Natural killer cell (primary cell): ENCODE measurements at regions of chr11 and their contacts with region 1.

Region 1: GRCh38 chr11:122853971-122854446 is 15.7 kb downstream of the CRTAM start:
- DNase-seq: peak in 1 of 2 donors; percentile 85
- ATAC-seq: no peak
- H3K4me3 ChIP-seq: no peak overlapping the region
- H3K4me3 Mint-ChIP-seq: no peak overlapping the region
- H3K27ac ChIP-seq: no peak overlapping the region
- H3K27ac Mint-ChIP-seq: no peak overlapping the region
- H3K4me1 ChIP-seq: peaks cover 54% of the 10 kb centered on the region
- H3K4me1 Mint-ChIP-seq: peaks cover 49 to 51% of the 10 kb centered on the region in 2 donors
- H3K27me3 ChIP-seq: no peaks in the 10 kb centered on the region
- H3K27me3 Mint-ChIP-seq: no peaks in the 10 kb centered on the region
- CTCF ChIP-seq: peak; percentile 82

Region 2: GRCh38 chr11:121696177-121696871 is 1157.7 kb before region 1 on chr11:
- intact Hi-C with region 1: no loop called
- DNase-seq: no peak
- ATAC-seq: no peak
- H3K4me3 ChIP-seq: no peak overlapping the region
- H3K4me3 Mint-ChIP-seq: no peak overlapping the region
- H3K27ac ChIP-seq: no peak overlapping the region
- H3K27ac Mint-ChIP-seq: no peak overlapping the region
- H3K4me1 ChIP-seq: no peaks in the 10 kb centered on the region
- H3K4me1 Mint-ChIP-seq: no peaks in the 10 kb centered on the region
- H3K27me3 ChIP-seq: no peaks in the 10 kb centered on the region
- H3K27me3 Mint-ChIP-seq: peaks cover 3 to 4% of the 10 kb centered on the region in 2 donors
- CTCF ChIP-seq: no peak

Region 3: DNA sequence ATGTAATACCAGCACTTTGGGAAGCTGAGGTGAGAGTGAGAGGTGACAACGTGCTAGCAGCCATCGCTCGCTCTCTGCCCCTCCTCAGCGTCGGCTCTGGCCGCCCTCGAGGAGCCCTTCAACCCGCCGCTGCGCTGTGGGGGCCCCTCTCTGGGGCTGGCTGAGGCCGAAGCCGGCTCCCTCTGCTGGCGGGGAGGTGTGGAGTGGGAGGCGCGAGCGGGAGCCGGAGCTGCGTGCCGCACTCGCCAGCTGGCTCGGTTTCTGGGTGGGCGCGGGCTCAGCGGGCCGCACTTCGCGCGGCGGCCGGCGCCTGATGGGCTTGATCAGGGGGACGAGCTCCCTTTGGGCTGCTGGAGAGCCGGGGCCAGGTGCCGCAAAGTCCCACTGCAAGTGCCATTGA is 297.4 kb before region 1 on chr11:
- intact Hi-C with region 1: no loop called
- DNase-seq: peak in 1 of 2 donors; percentile 11
- ATAC-seq: peak in 1 of 3 donors; percentile 72
- H3K4me3 ChIP-seq: no peak overlapping the region
- H3K4me3 Mint-ChIP-seq: peak overlapping the region; percentile 6
- H3K27ac ChIP-seq: no peak overlapping the region
- H3K27ac Mint-ChIP-seq: no peak overlapping the region
- H3K4me1 ChIP-seq: no peaks in the 10 kb centered on the region
- H3K4me1 Mint-ChIP-seq: no peaks in the 10 kb centered on the region
- H3K27me3 ChIP-seq: no peaks in the 10 kb centered on the region
- H3K27me3 Mint-ChIP-seq: peaks cover 8 to 14% of the 10 kb centered on the region in 2 donors
- CTCF ChIP-seq: no peak

Region 4: DNA sequence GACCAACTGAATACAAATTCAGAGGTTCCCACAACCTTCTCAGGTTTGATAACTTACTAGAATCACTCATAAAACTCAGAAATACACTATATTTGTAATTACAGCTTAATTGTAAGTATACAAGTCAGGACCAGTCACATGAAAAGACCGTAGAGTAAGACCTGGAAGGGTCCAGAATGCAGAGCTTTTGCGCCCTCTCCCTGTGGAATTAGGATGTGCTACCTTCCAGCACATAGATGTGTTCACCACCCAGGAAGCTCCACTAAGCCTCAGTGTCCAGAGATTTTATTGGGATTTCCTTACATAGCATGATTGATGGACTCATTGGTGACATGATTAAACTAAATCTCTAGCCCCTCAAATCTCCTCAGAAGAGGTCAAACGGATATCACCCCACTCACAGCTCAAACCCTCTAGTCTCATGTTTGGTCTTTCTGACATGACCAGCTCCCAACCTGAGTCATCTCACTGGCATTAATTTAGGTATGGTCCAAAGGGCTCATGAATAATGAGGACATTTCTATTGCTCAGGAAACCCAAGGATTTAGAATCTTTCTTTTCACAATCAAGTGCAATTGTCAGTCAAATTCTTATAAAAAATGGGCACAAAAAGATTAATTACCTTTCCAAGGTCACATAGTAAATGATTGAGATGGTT is 275.7 kb before region 1 on chr11:
- intact Hi-C with region 1: loop called (anchors 1 kb)
- DNase-seq: no peak
- ATAC-seq: no peak
- H3K4me3 ChIP-seq: no peak overlapping the region
- H3K4me3 Mint-ChIP-seq: no peak overlapping the region
- H3K27ac ChIP-seq: no peak overlapping the region
- H3K27ac Mint-ChIP-seq: no peak overlapping the region
- H3K4me1 ChIP-seq: peaks cover 8% of the 10 kb centered on the region
- H3K4me1 Mint-ChIP-seq: peaks cover 10 to 11% of the 10 kb centered on the region in 2 donors
- H3K27me3 ChIP-seq: no peaks in the 10 kb centered on the region
- H3K27me3 Mint-ChIP-seq: peaks cover 3 to 6% of the 10 kb centered on the region in 2 donors
- CTCF ChIP-seq: no peak

Region 5: GRCh38 chr11:122796128-122796717 is 57.8 kb before region 1 on chr11:
- intact Hi-C with region 1: loop called (anchors 1 kb)
- DNase-seq: peak; percentile 61 to 82
- ATAC-seq: peak; percentile 87 to 99 (median 95)
- H3K4me3 ChIP-seq: no peak overlapping the region
- H3K4me3 Mint-ChIP-seq: no peak overlapping the region
- H3K27ac ChIP-seq: no peak overlapping the region
- H3K27ac Mint-ChIP-seq: no peak overlapping the region
- H3K4me1 ChIP-seq: peaks cover 5% of the 10 kb centered on the region
- H3K4me1 Mint-ChIP-seq: peaks cover 0 to 5% of the 10 kb centered on the region in 2 donors
- H3K27me3 ChIP-seq: no peaks in the 10 kb centered on the region
- H3K27me3 Mint-ChIP-seq: no peaks in the 10 kb centered on the region
- CTCF ChIP-seq: peak; percentile 93

Region 6: DNA sequence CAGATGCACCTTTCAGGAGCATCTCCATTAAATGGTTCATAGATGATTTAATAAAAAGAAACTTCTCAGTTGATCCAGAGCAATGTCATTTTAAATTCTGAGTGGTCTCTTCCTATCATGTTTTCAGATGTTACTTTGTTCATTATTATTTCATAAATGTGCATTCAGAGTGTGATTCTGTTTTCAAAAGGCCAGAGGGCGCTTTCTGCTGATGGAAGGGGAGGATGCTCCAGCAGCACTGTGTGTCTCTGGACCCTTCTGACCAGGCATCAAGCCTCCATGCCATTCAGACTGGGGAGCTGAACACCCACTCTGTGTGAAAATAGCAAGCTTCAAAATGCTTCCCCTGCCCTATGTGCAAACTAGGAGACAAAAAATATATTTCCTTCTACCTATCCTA is 39.6 kb before region 1 on chr11:
- intact Hi-C with region 1: loop called (anchors 5 kb)
- DNase-seq: peak in 1 of 2 donors; percentile 45
- ATAC-seq: peak in 1 of 3 donors; percentile 57
- H3K4me3 ChIP-seq: no peak overlapping the region
- H3K4me3 Mint-ChIP-seq: no peak overlapping the region
- H3K27ac ChIP-seq: no peak overlapping the region
- H3K27ac Mint-ChIP-seq: no peak overlapping the region
- H3K4me1 ChIP-seq: no peaks in the 10 kb centered on the region
- H3K4me1 Mint-ChIP-seq: peaks cover 19 to 30% of the 10 kb centered on the region in 2 donors
- H3K27me3 ChIP-seq: no peaks in the 10 kb centered on the region
- H3K27me3 Mint-ChIP-seq: no peaks in the 10 kb centered on the region
- CTCF ChIP-seq: no peak

Region 7: GRCh38 chr11:122837528-122838346 is 16.3 kb before region 1 on chr11:
- intact Hi-C with region 1: loop called (anchors 1 kb)
- DNase-seq: no peak
- ATAC-seq: no peak
- H3K4me3 ChIP-seq: no peak overlapping the region
- H3K4me3 Mint-ChIP-seq: peak overlapping the region; percentile 72
- H3K27ac ChIP-seq: peak overlapping the region; percentile 31
- H3K27ac Mint-ChIP-seq: peak overlapping the region; percentile 12 to 85
- H3K4me1 ChIP-seq: peaks cover 43% of the 10 kb centered on the region
- H3K4me1 Mint-ChIP-seq: peaks cover 42 to 53% of the 10 kb centered on the region in 2 donors
- H3K27me3 ChIP-seq: no peaks in the 10 kb centered on the region
- H3K27me3 Mint-ChIP-seq: no peaks in the 10 kb centered on the region
- CTCF ChIP-seq: no peak

Region 8: DNA sequence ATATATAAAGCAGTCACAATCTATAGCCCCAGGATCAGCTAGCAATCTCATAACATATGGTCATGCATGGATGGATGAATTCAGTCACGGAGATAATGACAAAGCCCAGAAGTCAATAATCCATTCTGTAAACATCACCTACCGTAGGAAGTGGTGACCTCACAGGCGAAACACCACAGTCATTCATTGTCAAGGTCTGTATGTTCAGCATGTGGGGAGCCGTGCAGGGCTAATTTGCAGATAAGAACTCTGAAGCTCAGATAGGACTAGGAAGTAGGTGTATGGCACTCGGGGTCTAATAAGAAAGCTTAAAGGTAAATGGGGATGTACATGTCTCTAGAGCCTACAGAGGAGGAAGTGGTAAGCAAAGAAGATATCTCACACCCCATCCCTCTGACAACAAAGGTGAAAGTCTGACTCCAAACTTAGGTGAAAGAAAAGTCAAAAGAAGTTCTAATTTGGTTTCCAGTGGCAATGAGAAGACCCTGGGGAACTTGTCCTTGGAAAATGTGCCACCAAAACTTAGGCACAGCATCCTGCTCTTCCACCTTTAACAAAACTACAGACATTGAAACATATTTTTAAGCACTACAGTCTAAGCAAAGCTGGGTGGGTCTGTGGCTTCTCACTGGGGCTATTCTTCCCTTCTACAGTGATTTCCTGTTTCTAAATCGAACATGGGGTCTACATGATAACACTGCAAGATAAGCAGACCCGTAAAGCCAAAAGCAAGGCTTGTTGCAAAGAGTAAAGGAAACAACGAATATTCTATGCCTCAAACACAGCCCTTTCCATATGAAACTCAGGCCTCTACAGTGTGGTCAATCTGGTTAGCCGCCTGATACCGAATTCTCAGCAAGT is 10.5 kb before region 1 on chr11:
- intact Hi-C with region 1: loop called (anchors 1 kb)
- DNase-seq: peak; percentile 39 to 84
- ATAC-seq: peak; percentile 79 to 88 (median 88)
- H3K4me3 ChIP-seq: peak overlapping the region; percentile 3
- H3K4me3 Mint-ChIP-seq: peak overlapping the region; percentile 84
- H3K27ac ChIP-seq: peak overlapping the region; percentile 82
- H3K27ac Mint-ChIP-seq: peak overlapping the region; percentile 80 to 93
- H3K4me1 ChIP-seq: peaks cover 64% of the 10 kb centered on the region
- H3K4me1 Mint-ChIP-seq: peaks cover 65 to 71% of the 10 kb centered on the region in 2 donors
- H3K27me3 ChIP-seq: no peaks in the 10 kb centered on the region
- H3K27me3 Mint-ChIP-seq: no peaks in the 10 kb centered on the region
- CTCF ChIP-seq: no peak

Region 9: DNA sequence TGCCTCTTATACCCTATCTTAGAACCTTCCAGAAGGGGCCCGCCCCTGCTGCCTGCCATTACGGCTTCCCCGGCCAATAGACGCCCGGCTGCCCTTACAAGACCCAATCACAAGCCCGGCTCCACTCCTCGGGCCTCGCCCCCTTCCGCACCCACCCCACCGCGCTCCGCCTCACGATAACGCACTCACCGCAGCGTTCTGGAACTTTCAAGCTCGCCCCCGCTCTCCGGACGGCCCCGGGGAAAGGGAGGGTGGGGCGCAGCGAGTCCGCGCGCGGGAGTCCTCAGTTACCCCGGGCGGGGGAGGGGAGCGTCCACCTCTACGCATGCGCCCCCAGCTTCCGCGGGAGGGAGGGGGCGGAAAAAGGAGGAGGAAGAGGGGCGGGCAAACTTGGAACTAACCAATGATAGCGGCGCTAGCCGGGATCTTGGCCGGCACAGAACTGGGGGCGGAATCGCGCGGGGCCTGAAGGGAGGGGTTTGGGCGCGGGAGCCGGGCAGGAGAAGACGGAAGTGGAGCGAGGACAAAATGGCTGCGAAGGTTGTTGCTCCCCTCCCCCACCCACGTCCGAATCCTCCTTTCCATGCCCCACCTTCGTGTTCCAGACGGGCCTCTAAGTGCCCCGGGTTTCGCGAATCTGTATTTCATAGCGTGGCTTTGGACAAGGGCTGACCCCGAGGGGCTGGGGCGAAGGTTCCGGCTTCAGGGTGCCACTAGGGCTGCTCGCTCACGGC is 208.3 kb after region 1 on chr11:
- intact Hi-C with region 1: loop called (anchors 5 kb)
- DNase-seq: peak; percentile 98 to 99
- ATAC-seq: peak; percentile 78 to 93 (median 84)
- H3K4me3 ChIP-seq: peak overlapping the region; percentile 91
- H3K4me3 Mint-ChIP-seq: peak overlapping the region; percentile 98
- H3K27ac ChIP-seq: peak overlapping the region; percentile 98
- H3K27ac Mint-ChIP-seq: peak overlapping the region; percentile 99 to 100
- H3K4me1 ChIP-seq: peaks cover 47% of the 10 kb centered on the region
- H3K4me1 Mint-ChIP-seq: peaks cover 68 to 71% of the 10 kb centered on the region in 2 donors
- H3K27me3 ChIP-seq: no peaks in the 10 kb centered on the region
- H3K27me3 Mint-ChIP-seq: no peaks in the 10 kb centered on the region
- CTCF ChIP-seq: no peak